Vagina (tissue), 2 donors: ENCODE measurements at regions of chr9 and their contacts with region 1.

Region 1: DNA sequence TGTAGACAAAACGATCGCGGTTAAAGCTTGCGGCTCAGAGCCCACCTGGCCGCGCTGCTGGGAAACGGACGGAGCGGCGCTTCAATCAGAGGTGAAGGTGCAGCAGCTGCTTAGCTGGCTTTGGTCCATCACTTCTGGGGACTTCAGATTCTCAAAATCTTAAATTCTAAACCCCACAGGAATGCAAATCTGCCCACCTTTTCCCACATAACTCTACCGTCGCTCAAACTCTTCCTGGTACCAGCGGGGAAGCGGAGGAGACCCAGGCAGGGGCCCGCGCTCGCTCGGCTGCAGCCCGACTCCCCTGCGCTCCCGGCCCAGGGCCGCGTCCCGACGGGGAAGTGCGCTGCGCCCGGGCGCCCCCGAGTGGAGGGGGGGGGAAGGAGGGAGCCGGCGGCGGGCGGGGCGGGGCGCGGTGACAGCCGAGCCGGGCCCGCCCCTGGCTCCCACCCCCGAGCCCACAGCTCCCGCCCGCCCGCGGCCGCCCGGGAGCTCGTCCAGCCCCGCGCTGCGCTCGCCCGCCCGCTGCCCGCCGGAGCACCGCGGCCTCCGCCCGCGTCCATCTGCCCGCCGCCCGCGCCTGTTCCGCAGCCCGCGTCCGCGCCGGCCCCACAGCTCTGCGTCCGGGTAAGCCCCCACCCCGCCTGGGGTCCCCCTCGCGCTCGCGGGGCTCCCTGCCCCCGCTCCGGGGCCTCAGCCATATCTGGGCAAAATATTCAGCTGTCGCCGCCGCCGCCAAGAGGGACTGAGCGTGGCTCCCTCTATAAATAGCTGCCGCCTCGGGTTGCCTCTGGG is at the start of gene TMOD1:
- DNase-seq: no peak
- H3K4me3 ChIP-seq: peak within 1 kb of the TSS; percentile 63 to 80
- H3K27ac ChIP-seq: peak within 1 kb of the TSS; percentile 97
- H3K4me1 ChIP-seq: peaks cover 31% of the 10 kb centered on the region
- H3K27me3 ChIP-seq: no peaks in the 10 kb centered on the region
- CTCF ChIP-seq: no peak
- POLR2A ChIP-seq: peak in 1 of 2 donors; percentile 37
- total RNA-seq, gene TMOD1: 21.1 TPM

Region 2: DNA sequence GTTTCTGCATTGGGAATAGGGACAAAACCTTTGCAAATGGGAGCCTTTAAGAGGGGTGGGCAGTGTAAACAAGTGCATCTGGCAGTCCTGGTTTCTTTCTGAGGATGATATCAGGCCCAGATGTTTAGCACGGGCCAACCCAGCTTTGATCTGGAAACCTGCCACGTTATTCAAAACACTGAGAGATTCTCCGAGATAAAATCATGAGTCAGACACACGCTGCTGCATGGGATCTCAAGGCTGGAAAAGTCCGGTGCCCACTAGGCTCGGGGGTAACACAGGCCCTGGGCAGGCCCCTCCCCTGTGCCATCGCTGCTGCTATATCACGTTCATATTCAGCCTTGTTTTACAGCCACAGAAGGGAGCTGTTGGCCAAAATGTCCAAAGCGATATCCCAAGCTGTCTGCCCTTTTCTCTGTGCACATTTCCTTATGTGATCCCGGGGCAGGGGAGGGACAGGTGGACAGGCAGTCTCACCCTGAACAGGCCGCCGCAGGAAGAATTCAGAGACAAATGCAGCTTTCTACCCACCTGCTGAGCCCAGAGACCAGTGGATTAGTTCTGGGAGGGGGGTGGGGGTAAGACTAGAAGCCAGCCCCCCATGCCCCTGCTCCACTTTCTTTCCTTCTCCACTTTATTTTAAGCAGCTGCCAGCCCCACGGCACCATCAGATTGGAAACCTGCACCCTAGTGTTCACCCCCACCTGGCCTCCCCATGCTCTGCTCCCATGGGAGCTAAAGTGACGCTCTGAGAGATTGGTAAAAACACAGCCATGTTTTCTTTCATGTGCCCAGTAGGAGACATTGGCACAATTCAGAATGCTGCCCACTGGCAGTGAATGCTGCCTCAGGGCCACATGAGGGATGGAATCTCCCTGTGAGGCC is 63.2 kb after region 1 on chr9:
- intact Hi-C with region 1: loop called (anchors 5 kb)
- DNase-seq: peak in 1 of 2 donors; percentile 83
- H3K4me3 ChIP-seq: no peak overlapping the region
- H3K27ac ChIP-seq: peak overlapping the region; percentile 88
- H3K4me1 ChIP-seq: peaks cover 37% of the 10 kb centered on the region
- H3K27me3 ChIP-seq: no peaks in the 10 kb centered on the region
- CTCF ChIP-seq: no peak
- POLR2A ChIP-seq: no peak

Region 3: GRCh38 chr9:97598461-97599288 is 97.3 kb after region 1 on chr9:
- intact Hi-C with region 1: loop called (anchors 10 kb)
- DNase-seq: no peak
- H3K4me3 ChIP-seq: no peak overlapping the region
- H3K27ac ChIP-seq: peak overlapping the region; percentile 66
- H3K4me1 ChIP-seq: peaks cover 20% of the 10 kb centered on the region
- H3K27me3 ChIP-seq: no peaks in the 10 kb centered on the region
- CTCF ChIP-seq: peak; percentile 52 to 71 (median 58)
- POLR2A ChIP-seq: no peak

Region 4: DNA sequence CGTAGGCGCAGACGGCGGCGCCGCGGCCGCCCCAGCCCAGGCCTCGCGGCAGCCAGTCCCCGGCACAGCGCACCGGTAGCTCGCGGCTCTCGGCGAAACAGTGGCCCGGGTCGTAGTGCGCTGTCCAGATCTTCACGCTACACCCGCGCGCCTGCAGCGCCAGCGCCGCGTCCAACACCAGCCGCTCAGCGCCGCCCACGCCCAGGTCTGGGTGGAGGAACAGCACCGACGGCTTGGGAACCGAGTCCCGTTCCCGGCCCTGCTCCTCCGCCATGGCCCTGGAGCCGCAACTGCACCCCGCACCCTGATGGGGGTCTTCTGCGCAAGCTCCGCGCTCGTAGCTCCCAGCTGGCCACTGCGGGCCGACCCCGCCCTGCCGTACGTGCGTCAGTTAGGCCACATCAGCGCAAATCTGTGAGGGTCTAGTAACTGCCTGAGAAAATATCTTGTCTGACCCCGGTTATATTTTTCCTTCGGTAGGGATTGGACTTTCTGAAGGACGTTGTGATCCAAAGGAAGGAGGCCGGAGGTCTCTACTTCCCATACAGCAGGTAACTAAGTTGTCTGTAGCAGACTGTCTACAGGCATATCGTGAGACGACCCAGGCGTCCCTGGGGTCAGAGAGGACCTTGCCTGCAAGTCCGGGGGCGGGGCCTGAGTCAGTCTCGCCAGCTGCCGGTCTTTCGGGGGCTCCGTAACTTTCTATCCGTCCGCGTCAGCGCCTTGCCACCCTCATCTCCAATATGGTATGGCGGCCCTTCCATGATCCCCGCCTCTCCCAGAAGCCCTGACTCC is 1720.4 kb after region 1 on chr9 and contains the starts of genes ALG2 and SEC61B:
- intact Hi-C with region 1: loop called (anchors 5 kb)
- DNase-seq: peak in 1 of 2 donors; percentile 96
- H3K4me3 ChIP-seq: peak within 1 kb of the TSS; percentile 82 to 85
- H3K27ac ChIP-seq: peak within 1 kb of the TSS; percentile 93
- H3K4me1 ChIP-seq: peaks cover 75% of the 10 kb centered on the region
- H3K27me3 ChIP-seq: no peaks in the 10 kb centered on the region
- CTCF ChIP-seq: no peak
- POLR2A ChIP-seq: peak in 1 of 2 donors; percentile 71
- total RNA-seq, gene ALG2: 30.0 TPM
- total RNA-seq, gene SEC61B: 80.8 TPM